ENCODE measurements at regions of chr13 and their contacts with region 1.

Region 1: DNA sequence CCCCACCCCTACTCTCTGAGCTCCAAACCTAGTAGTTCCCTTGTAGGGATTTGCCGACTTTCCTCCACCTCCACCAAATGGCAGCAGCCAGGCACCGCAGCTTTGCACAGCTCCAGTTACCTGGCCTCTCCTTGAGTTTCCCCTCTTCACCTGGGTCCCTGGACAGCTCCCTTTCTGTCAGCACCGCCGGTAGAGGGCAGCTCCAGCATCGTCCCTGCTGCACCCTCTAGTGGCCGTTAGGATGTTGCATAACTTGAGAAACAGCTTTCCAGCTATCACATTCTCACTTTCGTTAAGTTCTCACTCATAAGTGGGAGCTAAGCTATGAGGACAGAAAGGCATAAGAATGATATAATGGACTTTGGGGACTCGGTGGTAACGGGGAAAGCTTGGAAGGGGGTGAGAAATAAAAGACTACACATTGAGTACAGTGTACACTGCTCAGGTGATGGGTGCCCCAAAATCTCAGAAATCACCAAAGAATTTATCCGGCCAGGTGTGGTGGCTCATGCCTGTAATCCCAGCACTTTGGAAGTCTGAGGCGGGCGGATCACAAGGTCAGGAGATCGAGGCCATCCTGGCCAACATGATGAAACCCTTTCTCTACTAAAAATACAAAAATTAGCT is 60.4 kb upstream of the OLFM4 start:
- DNase-seq: peak; percentile 56
- H3K4me3 ChIP-seq: no peak overlapping the region
- H3K27ac ChIP-seq: no peak overlapping the region
- H3K4me1 ChIP-seq: no peaks in the 10 kb centered on the region
- H3K27me3 ChIP-seq: no peaks in the 10 kb centered on the region
- CTCF ChIP-seq: peak; percentile 83 to 95
- POLR2A ChIP-seq: no peak

Region 2: DNA sequence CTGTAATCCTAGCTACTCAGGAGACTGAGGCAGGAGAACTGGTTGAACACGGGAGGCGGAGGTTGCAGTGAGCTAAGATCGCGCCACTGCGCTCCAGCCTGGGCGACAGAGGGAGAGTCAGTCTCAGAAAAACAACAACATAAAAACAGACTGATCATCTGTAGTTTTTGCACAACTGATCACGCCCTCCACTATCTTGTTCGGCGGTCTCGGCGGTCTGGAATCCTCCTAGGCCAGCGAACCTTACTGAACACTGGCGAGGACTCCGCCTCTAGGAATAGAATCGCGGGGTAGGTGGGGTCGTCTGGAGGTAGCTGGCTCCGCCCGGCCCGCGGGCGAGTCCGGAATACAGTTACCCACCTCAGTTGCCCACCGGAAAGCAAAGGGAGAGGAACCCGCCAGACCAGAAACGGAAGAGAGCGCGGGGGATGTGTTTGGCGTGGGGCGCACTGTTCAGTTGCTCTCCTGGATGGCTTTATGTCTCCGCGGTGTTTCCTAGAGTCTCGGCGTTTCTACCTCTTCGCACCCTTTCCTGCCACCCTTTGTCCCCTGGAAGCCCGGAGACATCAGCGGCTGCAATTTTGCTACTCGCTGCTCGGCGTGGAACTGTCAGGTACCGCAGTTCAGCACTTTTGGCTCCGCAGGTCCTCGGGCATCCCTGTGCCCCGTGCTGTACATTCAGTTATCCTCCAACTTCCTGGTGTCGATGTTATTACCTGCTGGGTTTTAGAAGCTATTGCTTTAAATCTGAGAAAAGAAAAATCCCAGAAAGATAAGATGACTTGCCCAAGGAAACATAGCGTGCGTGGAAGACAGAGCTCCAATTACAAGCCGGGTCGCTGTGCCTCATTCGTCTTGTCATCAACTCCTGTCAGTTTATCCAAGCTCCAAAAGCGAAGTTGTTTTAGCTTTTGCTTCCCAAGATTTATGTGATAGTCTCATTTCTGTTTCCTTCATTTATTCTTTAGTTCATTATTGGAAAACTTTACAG is 350.8 kb before region 1 on chr13:
- CTCF ChIA-PET with region 1: interaction called, 13 read pairs
- POLR2A ChIA-PET with region 1: no interaction called
- dilution Hi-C with region 1: no loop called
- intact Hi-C with region 1: no loop called
- DNase-seq: peak; percentile 62
- H3K4me3 ChIP-seq: peak overlapping the region; percentile 45 to 98 (median 94)
- H3K27ac ChIP-seq: peak overlapping the region; percentile 61
- H3K4me1 ChIP-seq: peaks cover 12% of the 10 kb centered on the region
- H3K27me3 ChIP-seq: no peaks in the 10 kb centered on the region
- CTCF ChIP-seq: no peak
- POLR2A ChIP-seq: peak; percentile 65

Region 3: GRCh38 chr13:52850396-52851136 is 117.6 kb before region 1 on chr13:
- CTCF ChIA-PET with region 1: interaction called, 5 read pairs
- POLR2A ChIA-PET with region 1: no interaction called
- dilution Hi-C with region 1: no loop called
- intact Hi-C with region 1: loop called (anchors 5 kb)
- DNase-seq: peak; percentile 20
- H3K4me3 ChIP-seq: peak overlapping the region; percentile 42 to 56 (median 45)
- H3K27ac ChIP-seq: no peak overlapping the region
- H3K4me1 ChIP-seq: peaks cover 5% of the 10 kb centered on the region
- H3K27me3 ChIP-seq: peaks cover 48 to 70% of the 10 kb centered on the region in 2 experiments
- CTCF ChIP-seq: no peak
- POLR2A ChIP-seq: no peak

Region 4: GRCh38 chr13:52955472-52955874 is 12.7 kb before region 1 on chr13:
- CTCF ChIA-PET with region 1: interaction called, 21 read pairs
- POLR2A ChIA-PET with region 1: no interaction called
- dilution Hi-C with region 1: no loop called
- intact Hi-C with region 1: no loop called
- DNase-seq: no peak
- H3K4me3 ChIP-seq: no peak overlapping the region
- H3K27ac ChIP-seq: no peak overlapping the region
- H3K4me1 ChIP-seq: no peaks in the 10 kb centered on the region
- H3K27me3 ChIP-seq: no peaks in the 10 kb centered on the region
- CTCF ChIP-seq: no peak
- POLR2A ChIP-seq: no peak